Naive thymus-derived CD4-positive, alpha-beta T cell (primary cell): ENCODE measurements at regions of chr5 and their contacts with region 1.

Region 1: GRCh38 chr5:66171349-66172344 is 27.5 kb downstream of the SREK1 start:
- DNase-seq: peak in 7 of 9 donors; percentile 69 to 85 (median 80)
- ATAC-seq: peak; percentile 89
- H3K4me3 ChIP-seq: no peak overlapping the region
- H3K4me3 Mint-ChIP-seq: peak overlapping the region in 6 of 10 donors; percentile 5 to 48 (median 38)
- H3K27ac ChIP-seq: peak overlapping the region; percentile 43
- H3K27ac Mint-ChIP-seq: peak overlapping the region; percentile 69 to 93 (median 90)
- H3K4me1 ChIP-seq: peaks cover 7 to 8% of the 10 kb centered on the region in 2 donors
- H3K4me1 Mint-ChIP-seq: peaks cover 9 to 39% (median 28%) of the 10 kb centered on the region in 7 donors
- H3K27me3 ChIP-seq: no peaks in the 10 kb centered on the region
- H3K27me3 Mint-ChIP-seq: no peaks in the 10 kb centered on the region

Region 2: DNA sequence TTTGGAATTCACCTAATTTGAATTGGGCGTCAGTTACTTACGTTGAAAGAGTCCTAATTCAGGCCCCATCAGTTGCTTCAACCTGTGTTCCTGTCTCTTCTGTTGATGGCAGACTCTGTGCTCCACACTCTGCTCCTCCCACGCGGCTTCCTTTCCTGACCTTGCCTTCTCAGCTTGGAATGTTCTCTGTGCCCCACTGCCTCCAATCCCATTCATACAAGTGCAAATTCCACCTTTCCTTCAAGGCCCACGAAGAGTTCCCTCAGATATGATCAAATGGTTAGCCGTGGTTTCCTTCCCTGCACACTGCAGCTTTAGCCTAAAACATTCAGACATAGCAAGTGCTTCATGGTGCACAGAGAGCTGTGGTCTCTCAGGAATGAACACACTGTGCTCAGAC is 38.1 kb after region 1 on chr5:
- CTCF ChIA-PET with region 1: no interaction called
- POLR2A ChIA-PET with region 1: no interaction called
- intact Hi-C with region 1: loop called in 1 of 2 experiments (anchors 2 kb)
- DNase-seq: no peak
- ATAC-seq: no peak
- H3K4me3 ChIP-seq: no peak overlapping the region
- H3K4me3 Mint-ChIP-seq: no peak overlapping the region
- H3K27ac ChIP-seq: no peak overlapping the region
- H3K27ac Mint-ChIP-seq: no peak overlapping the region
- H3K4me1 ChIP-seq: no peaks in the 10 kb centered on the region
- H3K4me1 Mint-ChIP-seq: peaks cover 0 to 2% (median 0%) of the 10 kb centered on the region in 7 donors
- H3K27me3 ChIP-seq: no peaks in the 10 kb centered on the region
- H3K27me3 Mint-ChIP-seq: no peaks in the 10 kb centered on the region

Region 3: DNA sequence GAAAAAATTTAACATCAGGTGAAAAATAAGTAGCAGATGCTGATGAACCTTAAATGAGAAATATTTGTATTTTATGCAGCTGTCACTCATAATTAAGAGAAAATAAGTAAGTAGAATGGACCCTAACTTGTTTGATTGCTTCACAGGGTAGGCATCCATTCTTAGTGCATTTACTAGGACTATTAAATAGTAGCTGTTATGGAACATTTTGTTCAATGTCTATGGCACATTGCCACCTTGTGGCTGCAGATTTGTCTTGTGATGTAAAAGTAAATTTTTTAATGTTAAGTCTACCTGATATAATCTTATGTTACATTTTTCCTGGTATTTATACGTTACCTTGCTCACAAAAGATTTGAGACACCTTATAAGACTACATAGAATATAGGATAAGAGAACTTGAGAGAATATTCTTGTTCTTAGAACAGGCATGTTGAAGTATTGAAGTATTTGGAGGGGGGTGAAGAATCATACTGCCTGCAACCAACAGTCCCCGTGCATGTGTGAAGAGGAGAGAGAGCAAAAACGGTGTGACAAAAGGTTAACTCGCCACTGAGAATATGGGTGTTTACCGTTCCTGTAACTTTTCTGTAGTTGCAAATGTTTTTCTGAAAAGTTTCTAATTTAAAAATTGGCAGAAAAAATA is 585.7 kb after region 1 on chr5:
- CTCF ChIA-PET with region 1: interaction called, 3 read pairs
- POLR2A ChIA-PET with region 1: no interaction called
- intact Hi-C with region 1: loop called (anchors 1 to 5 kb)
- DNase-seq: peak in 4 of 9 donors; percentile 5 to 37 (median 22)
- ATAC-seq: peak; percentile 54
- H3K4me3 ChIP-seq: no peak overlapping the region
- H3K4me3 Mint-ChIP-seq: no peak overlapping the region
- H3K27ac ChIP-seq: no peak overlapping the region
- H3K27ac Mint-ChIP-seq: no peak overlapping the region
- H3K4me1 ChIP-seq: no peaks in the 10 kb centered on the region
- H3K4me1 Mint-ChIP-seq: no peaks in the 10 kb centered on the region
- H3K27me3 ChIP-seq: no peaks in the 10 kb centered on the region
- H3K27me3 Mint-ChIP-seq: peaks cover 9 to 46% (median 15%) of the 10 kb centered on the region in 5 donors